BJ (cell line): ENCODE measurements at regions of chr12 and their contacts with region 1.

Region 1: DNA sequence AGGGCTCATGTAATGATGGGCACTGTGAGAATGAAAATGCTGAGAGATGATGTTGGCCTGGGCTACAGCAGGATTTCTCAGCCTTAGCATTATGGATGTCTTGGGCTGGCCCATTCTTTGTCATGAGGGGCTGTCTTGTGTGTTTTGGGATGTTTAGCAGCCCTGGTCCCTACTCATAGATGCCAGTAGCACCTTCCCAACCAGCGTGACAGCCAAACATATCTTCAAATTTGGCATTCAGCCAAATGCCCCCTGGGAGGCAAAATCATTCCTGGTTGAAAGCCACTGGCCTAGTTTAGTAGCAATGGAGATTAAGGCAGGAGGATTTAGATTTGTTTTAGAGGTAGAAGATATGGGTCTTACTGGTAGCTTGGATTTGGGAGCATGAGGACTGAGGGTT is 26.6 kb downstream of the UBE3B start:
- DNase-seq: no peak
- H3K4me3 ChIP-seq: no peak overlapping the region
- H3K27me3 ChIP-seq: no peaks in the 10 kb centered on the region
- CTCF ChIP-seq: no peak

Region 2: GRCh38 chr12:109518820-109519665 is 15.0 kb after region 1 on chr12:
- CTCF ChIA-PET with region 1: interaction called, 21 read pairs
- POLR2A ChIA-PET with region 1: interaction called, 3 read pairs
- DNase-seq: peak; percentile 26
- H3K4me3 ChIP-seq: no peak overlapping the region
- H3K27me3 ChIP-seq: no peaks in the 10 kb centered on the region
- CTCF ChIP-seq: peak; percentile 89

Region 3: DNA sequence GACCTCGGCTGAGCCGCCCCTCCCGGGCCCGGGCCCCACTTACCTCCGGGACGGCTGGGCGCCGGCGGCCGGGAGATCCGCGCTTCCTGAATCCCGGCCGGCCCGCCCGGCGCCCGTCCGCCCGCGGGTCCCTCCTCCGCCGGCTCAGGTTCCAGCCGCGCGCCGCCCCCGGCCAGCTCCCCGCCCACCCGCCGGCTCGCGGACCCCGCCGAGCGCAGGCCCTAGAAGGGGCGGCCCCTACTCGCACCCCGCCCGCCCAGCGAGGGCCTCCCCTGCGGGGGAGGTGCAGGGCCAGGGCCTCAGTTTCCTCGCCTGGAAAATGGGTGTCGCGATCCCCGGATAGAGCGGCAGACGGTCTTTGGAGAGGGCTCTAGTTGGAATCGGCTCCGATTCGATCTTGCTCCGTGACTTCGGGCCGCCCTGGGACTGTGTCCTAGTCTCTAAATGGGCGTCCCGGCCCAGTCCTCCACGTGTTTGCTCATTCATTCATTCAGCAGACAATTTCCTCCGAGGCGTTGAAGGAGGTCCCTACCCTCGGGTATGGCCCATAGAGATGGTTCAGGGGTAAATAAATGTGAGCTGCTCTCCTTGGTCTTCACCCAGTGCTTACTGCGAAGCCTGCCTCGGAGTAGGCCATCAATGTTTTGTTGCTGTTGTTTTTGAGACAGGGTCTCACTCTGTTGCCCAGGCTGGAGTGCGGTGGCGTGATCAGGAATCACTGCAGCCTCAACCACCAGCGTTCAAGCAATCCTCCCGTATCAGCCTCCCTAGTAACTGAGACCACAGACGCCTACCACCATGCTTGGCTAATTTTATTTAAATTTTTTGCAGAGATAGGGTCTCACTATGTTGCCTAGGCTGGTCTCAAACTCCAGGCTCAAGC is 329.5 kb after region 1 on chr12 and contains the start of gene TRPV4:
- CTCF ChIA-PET with region 1: no interaction called
- POLR2A ChIA-PET with region 1: no interaction called
- DNase-seq: no peak
- H3K4me3 ChIP-seq: peak within 1 kb of the TSS; percentile 74
- H3K27me3 ChIP-seq: no peaks in the 10 kb centered on the region
- CTCF ChIP-seq: no peak
- polyA plus RNA-seq, gene TRPV4: 7.4 and 13.4 TPM in 2 replicates